ENCODE measurements at regions of chr2 and their contacts with region 1.

Region 1: GRCh38 chr2:25131567-25132298 is 36.6 kb downstream of the POMC start:
- H3K4me3 ChIP-seq: no peak overlapping the region
- H3K27ac ChIP-seq: no peak overlapping the region
- H3K4me1 ChIP-seq: no peaks in the 10 kb centered on the region
- CTCF ChIP-seq: no peak

Region 2: DNA sequence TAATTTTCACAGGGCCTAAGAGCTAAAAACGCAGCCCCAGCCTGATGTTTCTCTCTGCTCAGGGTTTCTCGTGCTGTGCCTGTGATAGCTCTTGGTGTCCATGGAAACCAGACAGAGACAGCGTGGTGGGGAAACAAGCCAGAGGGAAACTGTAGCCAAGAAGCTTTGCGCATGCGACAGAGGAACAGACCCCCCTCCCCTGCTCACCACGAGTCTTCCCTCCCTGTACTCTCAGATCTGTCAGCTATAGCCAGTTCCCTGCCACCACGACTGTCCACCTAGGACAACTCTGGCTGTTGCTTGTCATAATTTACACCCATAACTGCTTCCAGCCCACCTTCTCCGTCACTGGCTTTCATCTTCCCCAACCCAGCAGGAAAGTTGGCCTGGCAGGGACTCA is 146.8 kb before region 1 on chr2:
- CTCF ChIA-PET with region 1: interaction called, 14 read pairs
- POLR2A ChIA-PET with region 1: no interaction called
- H3K4me3 ChIP-seq: no peak overlapping the region
- H3K27ac ChIP-seq: no peak overlapping the region
- H3K4me1 ChIP-seq: no peaks in the 10 kb centered on the region
- CTCF ChIP-seq: no peak

Region 3: GRCh38 chr2:25342372-25343186 is 210.8 kb after region 1 on chr2:
- CTCF ChIA-PET with region 1: no interaction called
- POLR2A ChIA-PET with region 1: no interaction called
- H3K4me3 ChIP-seq: peak overlapping the region; percentile 64
- H3K27ac ChIP-seq: peak overlapping the region; percentile 87; the same call in 1 of the 2 replicates
- H3K4me1 ChIP-seq: peaks cover 8% of the 10 kb centered on the region
- CTCF ChIP-seq: peak; percentile 95

Region 4: DNA sequence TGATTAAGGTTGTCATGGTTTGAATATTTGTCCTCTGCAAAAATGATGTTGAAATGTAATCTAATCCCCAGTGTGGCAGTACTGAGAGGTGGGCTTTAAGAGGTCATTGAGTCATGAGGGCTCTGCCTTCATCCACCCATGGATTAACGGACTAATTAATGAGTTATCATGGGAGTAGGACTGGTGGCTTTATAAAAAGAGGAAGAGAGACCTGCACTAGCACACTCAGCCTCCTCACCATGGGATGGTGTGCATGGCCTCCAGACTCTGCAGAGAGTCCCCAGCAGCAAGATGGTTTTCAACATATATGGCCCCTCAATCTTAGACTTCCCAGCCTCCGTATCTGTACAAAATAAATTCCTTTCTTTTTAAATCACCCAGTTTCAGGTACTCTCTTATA is 500.7 kb after region 1 on chr2:
- CTCF ChIA-PET with region 1: no interaction called
- POLR2A ChIA-PET with region 1: no interaction called
- H3K4me3 ChIP-seq: no peak overlapping the region
- H3K27ac ChIP-seq: no peak overlapping the region
- H3K4me1 ChIP-seq: no peaks in the 10 kb centered on the region
- CTCF ChIP-seq: no peak

Measured in HEK293 (cell line).